Activated CD4-positive, alpha-beta T cell treated with anti-CD3 and anti-CD28 coated beads for 36 hours (primary cell): ENCODE measurements at regions of chr13 and their contacts with region 1.

Region 1: GRCh38 chr13:49443704-49444523 is at the starts of genes CAB39L and SETDB2:
- DNase-seq: peak; percentile 99
- ATAC-seq: peak; percentile 94
- H3K4me3 Mint-ChIP-seq: peak within 1 kb of the TSS; percentile 100
- H3K27ac Mint-ChIP-seq: peak within 1 kb of the TSS; percentile 100
- H3K4me1 Mint-ChIP-seq: peaks cover 57% of the 10 kb centered on the region
- H3K27me3 Mint-ChIP-seq: no peaks in the 10 kb centered on the region
- total RNA-seq, gene CAB39L: 4.8 to 5.7 TPM
- total RNA-seq, gene SETDB2: 14.2 to 15.1 TPM

Region 2: GRCh38 chr13:48263196-48263595 is 1180.7 kb before region 1 on chr13:
- CTCF ChIA-PET with region 1: no interaction called
- POLR2A ChIA-PET with region 1: no interaction called
- intact Hi-C with region 1: no loop called
- DNase-seq: no peak
- ATAC-seq: no peak
- H3K4me3 Mint-ChIP-seq: no peak overlapping the region
- H3K27ac Mint-ChIP-seq: no peak overlapping the region
- H3K4me1 Mint-ChIP-seq: peaks cover 62% of the 10 kb centered on the region
- H3K27me3 Mint-ChIP-seq: no peaks in the 10 kb centered on the region

Region 3: GRCh38 chr13:48532506-48533499 is 911.1 kb before region 1 on chr13 and contains the start of gene RCBTB2:
- CTCF ChIA-PET with region 1: no interaction called
- POLR2A ChIA-PET with region 1: no interaction called
- intact Hi-C with region 1: loop called in 1 of 2 experiments (anchors 2 kb)
- DNase-seq: peak; percentile 99
- ATAC-seq: peak; percentile 93
- H3K4me3 Mint-ChIP-seq: peak within 1 kb of the TSS; percentile 92
- H3K27ac Mint-ChIP-seq: peak within 1 kb of the TSS; percentile 97
- H3K4me1 Mint-ChIP-seq: peaks cover 24% of the 10 kb centered on the region
- H3K27me3 Mint-ChIP-seq: no peaks in the 10 kb centered on the region
- total RNA-seq, gene RCBTB2: 1.1 to 1.6 TPM

Region 4: GRCh38 chr13:49247643-49248621 is 196.0 kb before region 1 on chr13 and contains the start of gene CDADC1:
- CTCF ChIA-PET with region 1: no interaction called
- POLR2A ChIA-PET with region 1: interaction called, 3 read pairs
- intact Hi-C with region 1: loop called in 1 of 2 experiments (anchors 2 kb)
- DNase-seq: peak; percentile 96
- ATAC-seq: peak; percentile 94
- H3K4me3 Mint-ChIP-seq: peak within 1 kb of the TSS; percentile 92
- H3K27ac Mint-ChIP-seq: peak within 1 kb of the TSS; percentile 96
- H3K4me1 Mint-ChIP-seq: peaks cover 34% of the 10 kb centered on the region
- H3K27me3 Mint-ChIP-seq: peaks cover 2% of the 10 kb centered on the region
- total RNA-seq, gene CDADC1: 8.5 to 9.7 TPM

Region 5: GRCh38 chr13:49495783-49496762 is 52.2 kb after region 1 on chr13 and contains the start of gene PHF11:
- CTCF ChIA-PET with region 1: interaction called, 8 read pairs
- POLR2A ChIA-PET with region 1: interaction called, 30 read pairs
- intact Hi-C with region 1: loop called (anchors 1 kb)
- DNase-seq: peak; percentile 95
- ATAC-seq: peak; percentile 81
- H3K4me3 Mint-ChIP-seq: peak within 1 kb of the TSS; percentile 91
- H3K27ac Mint-ChIP-seq: peak within 1 kb of the TSS; percentile 99
- H3K4me1 Mint-ChIP-seq: peaks cover 49% of the 10 kb centered on the region
- H3K27me3 Mint-ChIP-seq: no peaks in the 10 kb centered on the region
- total RNA-seq, gene PHF11: 84.0 to 106 TPM

Region 6: DNA sequence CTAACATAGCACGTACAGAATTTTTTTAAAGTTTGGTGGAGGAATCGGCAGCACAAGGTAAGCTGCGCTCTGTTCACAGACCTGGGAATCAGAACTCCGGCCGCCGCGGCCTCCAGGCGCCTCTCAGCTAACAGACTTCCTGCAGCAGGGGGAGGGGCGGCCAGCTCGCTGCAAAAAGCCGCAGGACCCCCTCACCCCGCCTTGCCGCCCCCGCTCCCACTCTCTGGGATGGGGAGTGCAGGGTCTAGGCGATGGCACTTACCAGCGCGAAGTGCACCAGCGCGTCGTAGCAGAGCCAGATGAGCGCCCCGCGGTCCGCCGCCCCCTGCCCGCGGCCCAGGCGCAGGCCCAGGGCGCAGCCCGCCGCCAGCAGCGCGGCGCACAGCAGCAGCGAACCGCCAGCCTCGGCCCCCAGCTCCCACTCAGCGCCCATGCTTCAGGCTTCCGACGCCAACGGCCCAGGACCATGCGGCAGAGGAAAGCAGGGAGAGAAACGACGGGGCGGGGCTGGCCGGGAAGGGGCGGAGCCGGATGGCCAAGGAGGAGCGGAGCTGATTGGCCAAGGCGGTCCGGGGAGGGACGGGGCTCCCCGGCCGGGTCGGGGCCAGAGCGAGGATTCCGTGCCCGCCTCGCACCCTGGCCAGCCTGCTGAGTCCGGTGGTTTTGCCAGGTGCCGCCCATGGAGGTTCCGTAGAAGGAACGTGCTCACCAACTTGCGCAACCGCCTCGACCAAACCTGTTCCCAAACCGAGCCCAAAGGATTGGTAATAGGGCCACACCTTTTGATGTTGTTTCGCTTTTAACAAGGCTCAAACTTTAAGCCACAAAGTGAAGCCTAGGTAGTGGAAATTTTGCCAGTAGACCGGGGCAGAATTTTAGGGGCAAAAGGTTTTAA is 247.3 kb after region 1 on chr13 and contains the start of gene EBPL:
- CTCF ChIA-PET with region 1: no interaction called
- POLR2A ChIA-PET with region 1: no interaction called
- intact Hi-C with region 1: loop called (anchors 2 to 5 kb)
- DNase-seq: peak; percentile 95
- ATAC-seq: peak; percentile 98
- H3K4me3 Mint-ChIP-seq: peak within 1 kb of the TSS; percentile 87
- H3K27ac Mint-ChIP-seq: peak within 1 kb of the TSS; percentile 84
- H3K4me1 Mint-ChIP-seq: peaks cover 30% of the 10 kb centered on the region
- H3K27me3 Mint-ChIP-seq: no peaks in the 10 kb centered on the region
- total RNA-seq, gene EBPL: 40.7 to 55.8 TPM

Region 7: DNA sequence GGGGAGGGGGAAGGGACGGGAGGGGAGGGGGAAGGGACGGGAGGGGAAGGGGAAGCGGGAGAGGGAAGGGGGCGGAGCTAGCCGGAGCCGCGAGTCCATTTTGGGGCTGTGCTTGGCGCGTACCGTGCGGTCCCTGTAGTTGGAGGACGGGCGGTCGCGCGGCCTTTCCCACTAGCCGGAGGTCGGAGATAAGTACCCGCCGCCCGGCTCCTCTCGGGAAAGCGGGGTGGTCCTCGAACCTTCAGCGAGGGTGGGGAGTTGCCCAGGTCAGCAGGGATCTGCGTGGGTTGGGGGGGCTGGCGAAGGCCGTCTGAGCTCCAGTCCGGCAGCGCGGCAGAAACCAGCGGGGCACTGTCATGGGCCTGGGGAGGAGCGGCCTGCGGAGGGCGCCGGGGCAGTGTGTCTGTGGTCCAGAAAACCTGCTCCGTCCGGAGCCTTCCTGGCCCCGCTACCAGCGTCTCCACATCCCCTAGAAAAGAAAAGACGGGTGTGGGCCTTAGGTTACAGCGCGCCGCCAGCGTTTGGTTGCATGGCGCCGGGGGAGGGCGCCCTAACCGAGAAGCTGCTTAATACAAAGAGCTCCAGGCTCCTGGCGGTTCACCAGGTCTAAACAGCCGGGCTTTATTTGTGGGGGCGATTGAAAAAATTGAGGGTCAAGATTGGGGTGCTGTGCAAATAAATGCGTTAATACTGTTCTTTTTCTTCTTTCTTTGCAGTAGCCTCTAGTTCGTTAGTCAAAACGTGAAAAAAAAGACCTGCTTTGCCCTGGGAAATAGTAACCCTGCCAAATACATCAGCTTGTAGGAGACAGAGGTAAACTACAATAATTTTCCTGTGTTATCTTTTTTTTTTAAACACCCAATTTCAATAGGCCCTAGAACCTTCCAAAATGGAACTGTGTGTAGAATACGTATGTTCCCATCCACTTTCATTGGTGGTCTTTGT is 553.3 kb after region 1 on chr13 and contains the start of gene TRIM13:
- CTCF ChIA-PET with region 1: no interaction called
- POLR2A ChIA-PET with region 1: no interaction called
- intact Hi-C with region 1: loop called in 1 of 2 experiments (anchors 2 kb)
- DNase-seq: peak; percentile 90
- ATAC-seq: peak; percentile 86
- H3K4me3 Mint-ChIP-seq: peak within 1 kb of the TSS; percentile 77
- H3K27ac Mint-ChIP-seq: peak within 1 kb of the TSS; percentile 76
- H3K4me1 Mint-ChIP-seq: peaks cover 47% of the 10 kb centered on the region
- H3K27me3 Mint-ChIP-seq: no peaks in the 10 kb centered on the region
- total RNA-seq, gene TRIM13: 10.6 to 12.9 TPM